ENCODE measurements at regions of chr19 and their contacts with region 1.

Region 1: GRCh38 chr19:10695401-10696398 is 5.5 kb upstream of the QTRT1 start:
- DNase-seq: peak; percentile 45
- ATAC-seq: peak; percentile 97
- H3K4me3 ChIP-seq: no peak overlapping the region
- H3K27ac ChIP-seq: no peak overlapping the region
- H3K4me1 ChIP-seq: no peaks in the 10 kb centered on the region
- H3K27me3 ChIP-seq: no peaks in the 10 kb centered on the region
- CTCF ChIP-seq: no peak
- EP300 ChIP-seq: no peak
- POLR2A ChIP-seq: no peak
- RAD21 ChIP-seq: no peak

Region 2: GRCh38 chr19:10461047-10461790 is 234.5 kb before region 1 on chr19:
- CTCF ChIA-PET with region 1: no interaction called
- POLR2A ChIA-PET with region 1: interaction called, 11 read pairs
- RAD21 ChIA-PET with region 1: no interaction called
- SMC1A ChIA-PET with region 1: no interaction called
- in situ Hi-C with region 1: no loop called
- intact Hi-C with region 1: no loop called
- DNase-seq: peak; percentile 60
- ATAC-seq: peak; percentile 100
- H3K4me3 ChIP-seq: peak overlapping the region; percentile 70; the same call in 1 of the 2 replicates
- H3K27ac ChIP-seq: no peak overlapping the region
- H3K4me1 ChIP-seq: peaks cover 4% of the 10 kb centered on the region; the same call in 1 of the 2 replicates
- H3K27me3 ChIP-seq: no peaks in the 10 kb centered on the region
- CTCF ChIP-seq: no peak
- EP300 ChIP-seq: no peak
- POLR2A ChIP-seq: no peak
- RAD21 ChIP-seq: no peak

Region 3: GRCh38 chr19:10543420-10544241 is 152.1 kb before region 1 on chr19 and contains the start of gene ATG4D:
- CTCF ChIA-PET with region 1: interaction called, 35 read pairs
- POLR2A ChIA-PET with region 1: interaction called, 3 read pairs
- RAD21 ChIA-PET with region 1: interaction called, 11 read pairs
- SMC1A ChIA-PET with region 1: interaction called, 10 read pairs
- in situ Hi-C with region 1: no loop called
- intact Hi-C with region 1: no loop called
- DNase-seq: no peak
- ATAC-seq: peak; percentile 91
- H3K4me3 ChIP-seq: peak within 1 kb of the TSS; percentile 93
- H3K27ac ChIP-seq: peak within 1 kb of the TSS; percentile 83
- H3K4me1 ChIP-seq: peaks cover 11% of the 10 kb centered on the region
- H3K27me3 ChIP-seq: peaks cover 0 to 4% of the 10 kb centered on the region in 2 experiments; a peak in 1 of 4 replicates
- CTCF ChIP-seq: no peak
- EP300 ChIP-seq: no peak
- POLR2A ChIP-seq: peak; percentile 95
- RAD21 ChIP-seq: no peak
- polyA plus RNA-seq, gene ATG4D: 0.39 to 2.3 TPM

Region 4: GRCh38 chr19:10580979-10581631 is 114.6 kb before region 1 on chr19:
- CTCF ChIA-PET with region 1: interaction called, 210 read pairs
- POLR2A ChIA-PET with region 1: interaction called, 3 read pairs
- RAD21 ChIA-PET with region 1: interaction called, 136 read pairs
- SMC1A ChIA-PET with region 1: interaction called, 103 read pairs
- in situ Hi-C with region 1: loop called (anchors 5 kb)
- intact Hi-C with region 1: loop called (anchors 1 kb)
- DNase-seq: no peak
- ATAC-seq: peak; percentile 96
- H3K4me3 ChIP-seq: no peak overlapping the region
- H3K27ac ChIP-seq: no peak overlapping the region
- H3K4me1 ChIP-seq: peaks cover 2% of the 10 kb centered on the region; the same call in 1 of the 2 replicates
- H3K27me3 ChIP-seq: no peaks in the 10 kb centered on the region; a peak in 1 of 4 replicates
- CTCF ChIP-seq: peak; percentile 99 to 100 (median 100); a peak in 5 of 6 replicates
- EP300 ChIP-seq: no peak
- POLR2A ChIP-seq: no peak
- RAD21 ChIP-seq: peak; percentile 99

Region 5: GRCh38 chr19:10644260-10645007 is 51.3 kb before region 1 on chr19:
- CTCF ChIA-PET with region 1: interaction called, 92 read pairs
- POLR2A ChIA-PET with region 1: interaction called, 7 read pairs
- RAD21 ChIA-PET with region 1: interaction called, 103 read pairs
- SMC1A ChIA-PET with region 1: interaction called, 50 read pairs
- in situ Hi-C with region 1: no loop called
- intact Hi-C with region 1: no loop called
- DNase-seq: no peak
- ATAC-seq: peak; percentile 91
- H3K4me3 ChIP-seq: no peak overlapping the region
- H3K27ac ChIP-seq: no peak overlapping the region
- H3K4me1 ChIP-seq: peaks cover 2% of the 10 kb centered on the region
- H3K27me3 ChIP-seq: no peaks in the 10 kb centered on the region
- CTCF ChIP-seq: peak; percentile 91 to 95 (median 93)
- EP300 ChIP-seq: no peak
- POLR2A ChIP-seq: no peak
- RAD21 ChIP-seq: peak; percentile 89

Region 6: DNA sequence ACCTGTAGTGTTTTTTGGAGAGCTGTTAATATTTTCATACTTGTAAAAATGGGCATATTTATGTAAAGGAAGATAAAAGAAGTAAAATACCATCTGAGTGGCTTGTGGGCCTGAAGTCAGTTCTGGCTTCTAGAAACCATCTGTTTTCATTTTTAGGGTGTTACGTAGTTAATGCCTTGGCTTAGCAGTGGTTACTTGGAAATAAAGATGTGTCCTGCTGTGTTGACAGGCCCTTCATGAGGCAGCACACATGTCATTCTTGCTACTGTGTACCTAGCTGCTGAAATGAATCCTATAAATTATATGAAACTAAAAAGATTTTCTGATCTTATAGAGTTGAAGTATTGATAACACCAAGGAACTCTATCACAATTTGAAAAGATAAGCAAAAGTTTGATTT is 25.5 kb before region 1 on chr19:
- CTCF ChIA-PET with region 1: interaction called, 15 read pairs
- POLR2A ChIA-PET with region 1: no interaction called
- RAD21 ChIA-PET with region 1: interaction called, 4 read pairs
- SMC1A ChIA-PET with region 1: interaction called, 4 read pairs
- in situ Hi-C with region 1: no loop called
- intact Hi-C with region 1: no loop called
- DNase-seq: no peak
- ATAC-seq: no peak
- H3K4me3 ChIP-seq: no peak overlapping the region
- H3K27ac ChIP-seq: no peak overlapping the region
- H3K4me1 ChIP-seq: peaks cover 14% of the 10 kb centered on the region
- H3K27me3 ChIP-seq: no peaks in the 10 kb centered on the region
- CTCF ChIP-seq: no peak
- EP300 ChIP-seq: no peak
- POLR2A ChIP-seq: no peak
- RAD21 ChIP-seq: no peak

Region 7: GRCh38 chr19:10760273-10760944 is 64.7 kb after region 1 on chr19:
- CTCF ChIA-PET with region 1: interaction called, 15 read pairs
- POLR2A ChIA-PET with region 1: no interaction called
- RAD21 ChIA-PET with region 1: no interaction called
- SMC1A ChIA-PET with region 1: interaction called, 3 read pairs
- in situ Hi-C with region 1: no loop called
- intact Hi-C with region 1: no loop called
- DNase-seq: no peak
- ATAC-seq: peak; percentile 57
- H3K4me3 ChIP-seq: peak overlapping the region; percentile 57; the same call in 1 of the 2 replicates
- H3K27ac ChIP-seq: peak overlapping the region; percentile 82
- H3K4me1 ChIP-seq: peaks cover 15% of the 10 kb centered on the region
- H3K27me3 ChIP-seq: no peaks in the 10 kb centered on the region
- CTCF ChIP-seq: no peak
- EP300 ChIP-seq: no peak
- POLR2A ChIP-seq: no peak
- RAD21 ChIP-seq: no peak

Region 8: GRCh38 chr19:10829967-10830366 is 134.3 kb after region 1 on chr19:
- CTCF ChIA-PET with region 1: no interaction called
- POLR2A ChIA-PET with region 1: no interaction called
- RAD21 ChIA-PET with region 1: no interaction called
- SMC1A ChIA-PET with region 1: no interaction called
- in situ Hi-C with region 1: no loop called
- intact Hi-C with region 1: no loop called
- DNase-seq: no peak
- ATAC-seq: no peak; the same call in 2 of the 3 replicates
- H3K4me3 ChIP-seq: no peak overlapping the region
- H3K27ac ChIP-seq: no peak overlapping the region
- H3K4me1 ChIP-seq: peaks cover under 1% of the 10 kb centered on the region; the same call in 1 of the 2 replicates
- H3K27me3 ChIP-seq: no peaks in the 10 kb centered on the region
- CTCF ChIP-seq: no peak
- EP300 ChIP-seq: no peak
- POLR2A ChIP-seq: 0 out of 2 replicates have a peak, but pooled peaks have one; percentile 5
- RAD21 ChIP-seq: no peak